Lower leg skin (tissue), 4 donors: ENCODE measurements at regions of chr1 and their contacts with region 1.

Region 1: GRCh38 chr1:15526490-15527339 is at the start of gene DNAJC16:
- DNase-seq: peak; percentile 100
- H3K4me3 ChIP-seq: peak within 1 kb of the TSS; percentile 96
- CTCF ChIP-seq: no peak
- POLR2A ChIP-seq: no peak
- total RNA-seq, gene DNAJC16: 14.3 to 20.0 (median 19.7) TPM

Region 2: DNA sequence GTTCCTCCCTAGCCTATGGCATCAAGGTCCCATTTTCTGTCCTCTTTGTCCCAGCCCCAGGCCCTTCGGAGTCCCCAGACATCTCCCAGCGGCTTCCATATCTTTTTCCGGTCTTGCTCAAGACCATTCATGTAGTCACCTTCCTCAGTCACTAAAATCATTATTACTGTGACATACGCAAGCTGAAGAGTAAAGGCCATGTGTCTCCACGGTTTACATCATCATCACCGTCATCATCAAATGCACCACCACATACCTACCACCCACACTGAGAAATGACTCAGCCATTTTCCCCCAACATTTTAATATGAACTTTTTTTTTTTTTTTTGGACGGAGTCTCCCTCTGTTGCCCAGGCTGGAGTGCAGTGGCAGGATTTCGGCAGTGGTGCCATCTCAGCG is 236.3 kb before region 1 on chr1:
- intact Hi-C with region 1: no loop called
- DNase-seq: no peak
- H3K4me3 ChIP-seq: no peak overlapping the region
- CTCF ChIP-seq: no peak
- POLR2A ChIP-seq: no peak

Region 3: GRCh38 chr1:15757575-15758393 is 231.1 kb after region 1 on chr1:
- intact Hi-C with region 1: loop called (anchors 5 kb)
- DNase-seq: peak in 1 of 2 donors; percentile 87
- H3K4me3 ChIP-seq: no peak overlapping the region
- CTCF ChIP-seq: no peak
- POLR2A ChIP-seq: no peak